ENCODE measurements at regions of chr1 and their contacts with region 1.

Region 1: GRCh38 chr1:171173069-171173468 is 12.0 kb upstream of the FMO2 start:
- DNase-seq: no peak
- H3K4me3 Mint-ChIP-seq: no peak overlapping the region
- H3K27ac Mint-ChIP-seq: no peak overlapping the region
- H3K4me1 Mint-ChIP-seq: no peaks in the 10 kb centered on the region
- H3K27me3 Mint-ChIP-seq: no peaks in the 10 kb centered on the region
- CTCF ChIP-seq: no peak

Region 2: GRCh38 chr1:171188388-171189266 is 15.6 kb after region 1 on chr1:
- CTCF ChIA-PET with region 1: interaction called, 10 read pairs
- POLR2A ChIA-PET with region 1: no interaction called
- intact Hi-C with region 1: no loop called
- DNase-seq: peak; percentile 87
- H3K4me3 Mint-ChIP-seq: no peak overlapping the region
- H3K27ac Mint-ChIP-seq: no peak overlapping the region
- H3K4me1 Mint-ChIP-seq: no peaks in the 10 kb centered on the region
- H3K27me3 Mint-ChIP-seq: no peaks in the 10 kb centered on the region
- CTCF ChIP-seq: peak; percentile 94

Measured in MCF 10A (cell line).